AG04449 (cell line): ENCODE measurements at regions of chr1 and their contacts with region 1.

Region 1: GRCh38 chr1:233075915-233076295 is 125.5 kb downstream of the NTPCR start:
- DNase-seq: no peak
- H3K4me3 ChIP-seq: no peak overlapping the region
- CTCF ChIP-seq: no peak

Region 2: DNA sequence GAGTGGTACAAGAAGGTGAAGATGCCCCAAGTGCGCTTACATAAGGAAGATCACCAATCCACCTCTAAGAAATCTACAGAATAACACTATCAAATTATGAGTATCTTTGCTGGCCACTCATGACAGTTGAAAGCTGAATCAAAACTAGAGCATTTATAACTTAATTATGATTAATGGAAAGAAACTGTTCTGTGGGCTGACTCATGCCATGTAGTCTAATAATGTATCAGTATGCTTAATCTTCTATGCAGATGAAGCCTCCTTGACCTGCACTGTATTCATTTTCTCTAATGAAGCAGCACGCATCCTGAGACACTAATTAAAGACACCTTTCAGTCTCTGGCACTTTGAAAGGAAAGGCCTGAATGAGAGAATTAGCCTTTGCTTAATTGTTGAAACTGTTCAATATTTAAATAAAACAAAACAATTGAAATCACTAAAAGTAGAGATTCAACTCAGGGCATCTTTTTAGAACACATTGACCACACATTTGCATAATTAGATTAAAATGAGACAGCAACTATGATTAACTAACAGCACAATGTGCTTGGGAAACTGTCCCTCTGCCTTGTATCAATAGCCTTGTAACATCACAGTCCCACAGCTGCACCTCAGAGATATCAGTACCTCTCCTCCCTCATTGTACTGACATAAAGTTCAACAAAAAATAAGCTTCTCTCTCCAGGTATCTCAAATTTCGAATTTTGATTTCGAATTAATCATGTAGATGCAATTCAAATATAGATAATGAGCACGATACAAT is 19.8 kb before region 1 on chr1:
- CTCF ChIA-PET with region 1: no interaction called
- POLR2A ChIA-PET with region 1: no interaction called
- DNase-seq: no peak
- H3K4me3 ChIP-seq: no peak overlapping the region
- CTCF ChIP-seq: no peak

Region 3: DNA sequence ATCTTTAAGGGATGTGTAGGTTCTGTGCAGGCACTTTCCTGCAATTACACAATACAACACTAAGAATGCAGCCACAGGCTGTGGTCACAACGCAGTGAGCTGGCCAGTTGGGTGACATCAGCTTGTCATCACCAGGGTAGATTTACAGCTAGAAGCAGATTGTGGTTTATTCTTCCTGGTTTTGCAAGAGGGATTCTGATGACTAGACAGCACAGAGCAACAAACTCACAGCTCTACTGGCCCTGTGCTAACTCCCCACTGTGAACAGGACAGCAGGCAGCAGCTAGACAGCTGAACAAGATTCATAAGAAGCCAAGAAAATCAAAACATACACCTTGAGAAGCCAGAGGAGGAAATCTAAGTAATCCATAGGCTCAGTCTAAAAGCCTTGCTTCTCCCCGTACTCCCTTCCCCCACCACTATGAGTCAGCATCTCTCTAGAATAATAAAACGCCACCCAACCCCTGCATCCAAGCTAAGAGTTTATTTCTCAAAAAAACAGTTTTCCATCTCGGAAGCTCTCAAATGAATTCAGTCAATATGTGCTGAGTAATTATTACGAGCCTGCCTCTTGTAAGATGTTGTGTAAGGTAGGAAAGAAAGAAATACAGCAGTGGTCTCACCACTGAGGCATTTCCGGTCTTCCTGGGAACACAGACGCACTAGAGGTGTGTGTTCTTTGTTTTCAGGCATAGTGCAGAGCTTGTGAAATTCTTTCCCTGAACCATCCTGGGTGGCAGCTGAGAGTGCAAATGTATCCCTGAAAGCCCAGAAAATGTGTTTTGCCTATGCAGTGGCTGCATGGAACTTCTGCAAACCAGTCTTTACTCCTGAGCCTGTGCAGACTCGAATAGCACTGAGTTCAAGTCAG is 37.3 kb after region 1 on chr1:
- CTCF ChIA-PET with region 1: no interaction called
- POLR2A ChIA-PET with region 1: interaction called, 18 read pairs
- DNase-seq: peak; percentile 99
- H3K4me3 ChIP-seq: peak overlapping the region; percentile 21
- CTCF ChIP-seq: no peak

Region 4: GRCh38 chr1:233157245-233157644 is 81.3 kb after region 1 on chr1:
- CTCF ChIA-PET with region 1: no interaction called
- POLR2A ChIA-PET with region 1: no interaction called
- DNase-seq: no peak
- H3K4me3 ChIP-seq: no peak overlapping the region
- CTCF ChIP-seq: no peak

Region 5: GRCh38 chr1:234509452-234510328 is 1433.8 kb after region 1 on chr1:
- CTCF ChIA-PET with region 1: no interaction called
- POLR2A ChIA-PET with region 1: no interaction called
- DNase-seq: no peak
- H3K4me3 ChIP-seq: no peak overlapping the region
- CTCF ChIP-seq: no peak